ENCODE measurements at regions of chr17 and their contacts with region 1.

Region 1: GRCh38 chr17:48816774-48817590 is at the start of gene TTLL6:
- DNase-seq: peak; percentile 29 to 57 (median 34)
- H3K4me3 ChIP-seq: peak within 1 kb of the TSS in 1 of 3 experiments; percentile 51
- H3K4me3 Mint-ChIP-seq: peak within 1 kb of the TSS; percentile 25 to 89
- H3K27ac ChIP-seq: no peak within 1 kb of the TSS
- H3K27ac Mint-ChIP-seq: peak within 1 kb of the TSS in 1 of 7 donors; percentile 72
- H3K4me1 ChIP-seq: peaks cover 10 to 12% of the 10 kb centered on the region in 2 donors
- H3K4me1 Mint-ChIP-seq: peaks cover 11% of the 10 kb centered on the region
- H3K27me3 ChIP-seq: peaks cover 49 to 50% of the 10 kb centered on the region in 2 donors
- H3K27me3 Mint-ChIP-seq: peaks cover 61 to 87% (median 65%) of the 10 kb centered on the region in 3 donors
- CTCF ChIP-seq: no peak
- polyA plus RNA-seq, gene TTLL6: not detected

Region 2: DNA sequence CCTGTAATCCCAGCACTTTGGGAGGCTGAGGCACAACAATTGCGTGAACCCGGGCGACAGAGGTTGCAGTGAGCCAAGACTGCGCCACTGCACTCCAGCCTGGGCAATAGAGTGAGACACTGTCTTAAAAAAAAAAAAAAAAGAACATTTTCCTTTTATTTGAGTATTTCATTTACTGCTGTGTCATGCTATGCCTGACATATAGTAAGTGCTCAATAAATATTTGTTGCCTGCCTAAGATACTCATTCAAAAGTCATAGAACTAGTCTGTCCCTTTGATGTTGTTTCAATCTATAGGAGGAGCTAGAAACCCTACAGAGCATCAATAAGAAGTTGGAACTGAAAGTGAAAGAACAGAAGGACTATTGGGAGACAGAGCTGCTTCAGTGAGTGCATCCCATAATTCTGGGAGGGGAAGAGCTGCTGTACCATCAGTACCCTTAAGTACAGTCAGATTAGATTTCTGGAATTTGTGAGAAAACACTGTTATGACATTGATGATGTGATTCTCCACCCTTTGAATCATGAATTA is 33.9 kb after region 1 on chr17:
- intact Hi-C with region 1: loop called in 1 of 2 experiments (anchors 5 kb)
- DNase-seq: no peak
- H3K4me3 ChIP-seq: no peak overlapping the region
- H3K4me3 Mint-ChIP-seq: no peak overlapping the region
- H3K27ac ChIP-seq: peak overlapping the region in 1 of 2 donors; percentile 48
- H3K27ac Mint-ChIP-seq: peak overlapping the region in 3 of 7 donors; percentile 23 to 53 (median 30)
- H3K4me1 ChIP-seq: peaks cover 9 to 18% of the 10 kb centered on the region in 2 donors
- H3K4me1 Mint-ChIP-seq: peaks cover 10% of the 10 kb centered on the region
- H3K27me3 ChIP-seq: no peaks in the 10 kb centered on the region
- H3K27me3 Mint-ChIP-seq: no peaks in the 10 kb centered on the region
- CTCF ChIP-seq: no peak

Measured in CD14-positive monocyte (primary cell).